Heart right ventricle (tissue), 16 donors: ENCODE measurements at regions of chr19 and their contacts with region 1.

Region 1: DNA sequence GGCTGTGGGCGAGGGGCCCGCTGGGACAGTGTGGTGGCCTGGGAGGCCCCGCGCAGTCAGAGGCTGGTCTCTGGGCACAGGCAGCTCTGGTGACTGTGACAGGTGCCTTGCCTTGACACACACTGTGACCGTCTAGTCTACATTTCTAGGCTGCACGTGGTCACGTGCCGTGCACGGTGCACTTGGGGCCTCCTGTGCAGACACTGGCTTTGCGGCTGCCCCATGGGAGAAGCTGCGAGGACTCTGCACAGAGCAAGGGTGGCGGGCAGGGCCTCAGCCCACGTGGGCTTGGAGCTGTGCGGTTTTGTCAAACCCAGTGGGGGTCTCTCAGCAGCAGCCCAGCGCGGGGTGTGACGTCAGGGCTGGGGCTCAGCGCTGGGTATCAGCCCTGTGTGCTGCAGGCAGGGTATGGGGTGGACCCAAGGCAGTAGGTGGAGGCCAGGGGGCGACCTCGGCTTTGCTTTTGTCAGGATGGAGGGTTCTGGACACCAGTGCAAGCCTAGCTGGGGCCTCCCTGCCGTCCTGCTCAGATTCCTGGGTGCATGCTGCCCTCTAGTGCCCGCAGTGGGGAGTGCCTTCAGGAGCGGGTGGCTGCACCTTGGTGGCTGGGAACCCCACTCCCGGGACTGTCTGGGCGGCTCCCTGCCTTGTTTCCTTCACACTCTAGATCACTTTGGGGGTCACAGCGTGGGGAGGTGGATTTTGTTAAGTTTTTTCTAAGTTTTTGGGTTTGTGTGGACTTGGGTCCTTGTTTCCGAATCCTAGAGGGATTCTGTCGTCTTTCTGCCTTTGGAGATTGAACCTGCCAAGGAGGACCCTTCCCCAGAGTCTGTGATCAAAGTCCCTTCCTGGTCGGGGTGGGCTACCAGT is 62.6 kb downstream of the KDM4B start:
- DNase-seq: peak; percentile 80 to 87
- ATAC-seq: peak; percentile 72 to 91 (median 84)
- H3K4me3 ChIP-seq: no peak overlapping the region
- H3K27ac ChIP-seq: peak overlapping the region in 1 of 10 donors; percentile 62
- H3K4me1 ChIP-seq: peaks cover 3 to 74% (median 51%) of the 10 kb centered on the region in 9 donors
- H3K27me3 ChIP-seq: no peaks in the 10 kb centered on the region
- CTCF ChIP-seq: peak; percentile 88 to 97 (median 94)

Region 2: GRCh38 chr19:4803736-4804695 is 227.4 kb before region 1 on chr19:
- intact Hi-C with region 1: loop called in 2 of 10 experiments (anchors 5 to 10 kb)
- DNase-seq: peak; percentile 55 to 69
- ATAC-seq: peak; percentile 50 to 78 (median 63)
- H3K4me3 ChIP-seq: no peak overlapping the region
- H3K27ac ChIP-seq: peak overlapping the region in 1 of 10 donors; percentile 80
- H3K4me1 ChIP-seq: peaks cover 0 to 34% (median 18%) of the 10 kb centered on the region in 9 donors
- H3K27me3 ChIP-seq: no peaks in the 10 kb centered on the region
- CTCF ChIP-seq: peak; percentile 61 to 89 (median 79)

Region 3: GRCh38 chr19:4867534-4868285 is 163.8 kb before region 1 on chr19 and contains the start of gene PLIN3:
- intact Hi-C with region 1: loop called in 9 of 10 experiments (anchors 1 to 5 kb)
- DNase-seq: peak; percentile 98
- ATAC-seq: peak; percentile 97 to 99 (median 98)
- H3K4me3 ChIP-seq: peak within 1 kb of the TSS; percentile 70 to 99 (median 84)
- H3K27ac ChIP-seq: peak within 1 kb of the TSS in 9 of 10 donors; percentile 67 to 97 (median 87)
- H3K4me1 ChIP-seq: peaks cover 0 to 40% (median 8%) of the 10 kb centered on the region in 9 donors
- H3K27me3 ChIP-seq: no peaks in the 10 kb centered on the region
- CTCF ChIP-seq: no peak
- total RNA-seq, gene PLIN3: 16.3 to 52.9 (median 26.0) TPM

Region 4: DNA sequence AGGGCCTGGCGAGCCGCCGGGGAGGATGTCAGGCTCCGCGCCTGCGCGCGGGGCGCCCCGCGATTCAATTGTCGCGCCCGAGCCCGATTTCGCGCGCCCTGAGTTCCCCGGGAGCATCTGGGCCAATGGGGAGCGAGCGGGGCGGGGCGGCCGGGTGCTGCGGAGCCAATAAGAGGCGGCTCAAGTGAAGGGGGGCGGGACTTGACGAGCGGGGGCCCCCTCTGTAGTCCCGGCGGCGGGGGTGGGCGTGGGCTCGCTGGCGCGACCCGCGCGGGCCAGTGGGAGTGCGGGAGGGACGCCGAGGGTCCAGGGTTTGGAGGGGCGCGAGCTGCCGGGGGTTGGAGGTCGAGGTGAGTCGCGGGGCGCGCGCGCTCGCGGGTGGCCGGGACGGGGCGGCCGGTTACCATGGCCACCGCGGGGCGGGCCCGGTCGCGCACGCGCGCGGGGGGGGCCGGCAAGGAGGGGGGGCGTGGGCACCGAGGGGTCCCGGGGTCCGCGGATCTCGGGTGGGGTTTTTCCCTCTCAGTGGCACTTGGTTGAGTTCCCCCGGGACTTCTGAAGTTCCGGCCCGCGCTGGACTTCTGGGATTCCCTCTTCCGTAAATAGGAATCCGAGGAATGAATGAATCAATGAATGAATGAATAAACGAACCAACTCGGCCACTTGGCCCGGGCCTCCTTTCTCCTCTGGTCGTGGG is 121.4 kb before region 1 on chr19:
- intact Hi-C with region 1: loop called in 1 of 10 experiments (anchors 5 kb)
- DNase-seq: peak; percentile 91 to 93
- ATAC-seq: peak; percentile 93 to 98 (median 96)
- H3K4me3 ChIP-seq: peak overlapping the region; percentile 41 to 93 (median 69)
- H3K27ac ChIP-seq: peak overlapping the region in 1 of 10 donors; percentile 73
- H3K4me1 ChIP-seq: peaks cover 4 to 59% (median 25%) of the 10 kb centered on the region in 9 donors
- H3K27me3 ChIP-seq: peaks cover 0 to 11% (median 4%) of the 10 kb centered on the region in 7 donors
- CTCF ChIP-seq: no peak

Region 5: DNA sequence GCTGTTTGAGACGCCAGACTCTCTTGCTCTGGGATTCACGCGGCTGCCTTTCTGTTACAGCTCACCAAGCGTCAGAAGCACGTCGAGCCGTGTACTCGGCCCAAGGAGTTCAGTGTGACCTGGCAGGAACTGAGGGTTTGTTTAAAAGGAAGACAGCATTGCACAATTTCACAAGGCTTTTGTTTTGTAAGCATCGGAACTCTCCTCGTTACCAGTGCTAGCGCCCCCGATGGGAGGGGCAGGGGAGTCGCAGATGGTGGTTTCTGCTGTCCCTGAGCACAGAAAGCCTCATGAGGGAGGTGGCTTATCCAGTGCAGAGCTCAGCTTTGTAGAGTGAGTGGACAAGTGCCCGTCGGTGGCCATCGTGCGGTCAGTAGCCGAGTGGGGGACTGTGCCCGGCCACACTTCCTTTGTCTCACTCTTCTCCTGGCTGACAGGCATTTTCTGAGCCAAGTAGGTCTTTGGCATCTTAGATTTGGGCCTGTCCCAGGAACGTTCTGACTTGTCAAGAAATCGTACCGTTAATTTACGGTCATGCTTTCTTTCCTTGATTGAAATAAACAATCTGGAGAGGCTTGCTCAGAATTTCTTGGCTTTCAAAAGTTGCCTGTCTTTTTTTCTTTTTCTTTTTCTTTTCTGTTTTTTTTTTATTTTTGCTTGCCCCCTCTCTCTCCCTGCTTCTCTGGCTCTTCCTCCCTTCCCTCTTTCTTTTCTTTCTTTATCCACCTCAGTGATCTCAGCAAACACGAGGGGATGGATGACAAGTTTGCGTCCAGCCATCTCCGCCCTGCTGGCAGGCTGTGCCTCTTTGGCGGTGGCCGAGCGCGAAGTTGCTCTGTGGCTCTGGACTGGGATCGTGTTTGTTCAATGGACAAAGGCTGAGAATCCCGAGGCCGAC is 54.8 kb before region 1 on chr19:
- intact Hi-C with region 1: loop called in 5 of 10 experiments (anchors 5 to 10 kb)
- DNase-seq: peak; percentile 57 to 65
- ATAC-seq: peak; percentile 58 to 86 (median 70)
- H3K4me3 ChIP-seq: peak overlapping the region in 5 of 10 donors; percentile 1 to 23 (median 9)
- H3K27ac ChIP-seq: peak overlapping the region; percentile 51 to 88 (median 70)
- H3K4me1 ChIP-seq: peaks cover 6 to 94% (median 74%) of the 10 kb centered on the region in 9 donors
- H3K27me3 ChIP-seq: no peaks in the 10 kb centered on the region
- CTCF ChIP-seq: peak in 7 of 9 donors; percentile 9 to 58 (median 27)